Endothelial cell of umbilical vein (primary cell): ENCODE measurements at regions of chr1 and their contacts with region 1.

Region 1: DNA sequence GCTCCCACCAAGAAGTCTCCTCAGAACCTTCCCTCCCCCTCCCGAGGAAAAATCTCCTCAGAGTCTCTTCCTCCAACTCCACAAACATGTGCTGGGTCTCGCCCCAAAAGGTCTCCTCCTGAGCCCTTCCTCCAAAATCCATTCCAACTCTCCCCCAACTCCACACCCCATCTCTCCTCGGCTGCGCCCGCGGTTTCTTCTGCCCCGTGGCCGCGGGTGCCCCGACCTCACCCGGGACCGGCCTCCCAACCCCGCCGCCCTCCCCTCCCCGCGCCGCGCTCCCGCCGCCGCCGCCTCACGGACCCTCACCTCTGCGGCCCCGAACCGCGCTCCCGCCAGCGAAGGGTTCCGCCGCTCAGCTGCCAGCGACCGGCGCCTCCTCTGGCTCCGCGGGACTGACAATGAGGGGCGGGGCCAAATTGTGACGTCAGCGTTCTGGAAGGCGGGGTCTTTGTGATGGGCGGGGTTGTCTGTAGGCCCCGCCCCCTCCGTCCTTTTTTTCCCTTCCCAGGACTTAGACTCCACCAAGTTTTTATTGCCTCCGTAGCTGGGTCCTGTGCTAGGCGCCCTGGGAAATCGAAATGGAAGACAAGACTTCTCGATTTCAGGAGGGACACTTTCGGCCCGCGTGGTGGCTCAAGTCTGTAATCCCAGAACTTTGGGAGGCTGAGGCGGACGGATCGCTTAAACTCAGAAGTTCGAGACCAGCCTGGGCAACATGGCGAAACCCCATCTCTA is at the start of gene LUZP1:
- DNase-seq: peak; percentile 93
- H3K4me3 ChIP-seq: peak within 1 kb of the TSS; percentile 84 to 95 (median 93)
- H3K27ac ChIP-seq: peak within 1 kb of the TSS; percentile 77
- H3K4me1 ChIP-seq: peaks cover 32% of the 10 kb centered on the region
- H3K27me3 ChIP-seq: no peaks in the 10 kb centered on the region
- CTCF ChIP-seq: peak in 1 of 2 donors; percentile 7
- POLR2A ChIP-seq: peak; percentile 88
- total RNA-seq, gene LUZP1: 82.4 and 92.3 TPM in 2 replicates

Region 2: GRCh38 chr1:23129846-23130245 is 38.8 kb before region 1 on chr1:
- CTCF ChIA-PET with region 1: interaction called, 3 read pairs
- POLR2A ChIA-PET with region 1: interaction called, 4 read pairs
- dilution Hi-C with region 1: no loop called
- intact Hi-C with region 1: loop called (anchors 2 kb)
- DNase-seq: peak; percentile 78
- H3K4me3 ChIP-seq: no peak overlapping the region
- H3K27ac ChIP-seq: peak overlapping the region; percentile 76
- H3K4me1 ChIP-seq: peaks cover 67% of the 10 kb centered on the region
- H3K27me3 ChIP-seq: no peaks in the 10 kb centered on the region
- CTCF ChIP-seq: no peak
- POLR2A ChIP-seq: peak; percentile 40

Region 3: DNA sequence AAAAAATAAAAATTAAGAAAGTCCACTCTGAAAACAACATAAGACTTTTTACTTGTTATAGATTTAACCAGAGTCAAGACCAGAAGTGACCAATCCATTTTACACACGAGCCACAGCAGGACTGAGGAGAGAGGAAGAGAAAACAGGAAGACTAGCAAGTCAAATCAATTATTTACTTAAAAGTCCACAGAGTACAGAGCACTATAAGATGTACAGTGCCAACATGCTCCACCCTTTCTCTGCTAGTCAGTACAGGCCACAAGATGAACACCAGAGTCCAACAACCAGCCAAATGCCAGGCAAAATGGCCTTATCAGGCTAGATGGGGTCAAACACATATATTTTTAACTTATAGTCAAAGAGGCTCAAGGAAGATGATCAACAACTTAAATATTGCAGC is 19.5 kb before region 1 on chr1:
- CTCF ChIA-PET with region 1: interaction called, 5 read pairs
- POLR2A ChIA-PET with region 1: interaction called, 3 read pairs
- dilution Hi-C with region 1: no loop called
- intact Hi-C with region 1: loop called (anchors 2 kb)
- DNase-seq: peak; percentile 30
- H3K4me3 ChIP-seq: no peak overlapping the region
- H3K27ac ChIP-seq: no peak overlapping the region
- H3K4me1 ChIP-seq: peaks cover 17% of the 10 kb centered on the region
- H3K27me3 ChIP-seq: no peaks in the 10 kb centered on the region
- CTCF ChIP-seq: no peak
- POLR2A ChIP-seq: no peak

Region 4: DNA sequence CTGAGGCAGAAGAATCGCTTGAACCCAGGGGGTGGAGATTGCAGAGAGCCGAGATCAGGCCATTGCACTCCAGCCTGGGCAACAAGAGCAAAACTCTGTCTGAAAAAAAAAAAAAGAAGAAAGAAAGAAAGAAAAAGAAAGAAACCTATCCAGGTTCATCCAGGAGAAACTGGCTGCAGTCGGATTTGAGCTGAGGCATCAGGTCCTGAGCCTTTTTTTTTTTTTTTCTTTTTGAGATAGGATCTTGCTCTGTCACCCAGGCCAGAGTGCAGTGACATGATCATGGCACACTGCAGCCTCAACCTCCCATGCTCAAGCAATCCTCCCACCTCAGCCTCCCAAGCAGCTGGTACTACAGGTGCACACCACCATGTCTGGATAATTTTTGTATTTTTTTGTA is 22.6 kb after region 1 on chr1:
- CTCF ChIA-PET with region 1: no interaction called
- POLR2A ChIA-PET with region 1: no interaction called
- dilution Hi-C with region 1: no loop called
- intact Hi-C with region 1: no loop called
- DNase-seq: no peak
- H3K4me3 ChIP-seq: no peak overlapping the region
- H3K27ac ChIP-seq: no peak overlapping the region
- H3K4me1 ChIP-seq: peaks cover 19% of the 10 kb centered on the region
- H3K27me3 ChIP-seq: no peaks in the 10 kb centered on the region
- CTCF ChIP-seq: no peak
- POLR2A ChIP-seq: no peak